Right cardiac atrium (tissue), 5 donors: ENCODE measurements at regions of chr4 and their contacts with region 1.

Region 1: GRCh38 chr4:153634738-153635353 is 49.2 kb upstream of the TLR2 start:
- DNase-seq: no peak
- ATAC-seq: peak in 1 of 2 donors; percentile 44
- H3K4me3 ChIP-seq: no peak overlapping the region
- H3K27ac ChIP-seq: no peak overlapping the region
- H3K4me1 ChIP-seq: no peaks in the 10 kb centered on the region
- H3K27me3 ChIP-seq: no peaks in the 10 kb centered on the region

Region 2: GRCh38 chr4:153750197-153750817 is 115.5 kb after region 1 on chr4:
- intact Hi-C with region 1: loop called in 2 of 4 experiments (anchors 5 kb)
- DNase-seq: peak in 1 of 3 donors; percentile 33
- ATAC-seq: peak; percentile 54 to 77
- H3K4me3 ChIP-seq: no peak overlapping the region
- H3K27ac ChIP-seq: no peak overlapping the region
- H3K4me1 ChIP-seq: no peaks in the 10 kb centered on the region
- H3K27me3 ChIP-seq: no peaks in the 10 kb centered on the region

Region 3: DNA sequence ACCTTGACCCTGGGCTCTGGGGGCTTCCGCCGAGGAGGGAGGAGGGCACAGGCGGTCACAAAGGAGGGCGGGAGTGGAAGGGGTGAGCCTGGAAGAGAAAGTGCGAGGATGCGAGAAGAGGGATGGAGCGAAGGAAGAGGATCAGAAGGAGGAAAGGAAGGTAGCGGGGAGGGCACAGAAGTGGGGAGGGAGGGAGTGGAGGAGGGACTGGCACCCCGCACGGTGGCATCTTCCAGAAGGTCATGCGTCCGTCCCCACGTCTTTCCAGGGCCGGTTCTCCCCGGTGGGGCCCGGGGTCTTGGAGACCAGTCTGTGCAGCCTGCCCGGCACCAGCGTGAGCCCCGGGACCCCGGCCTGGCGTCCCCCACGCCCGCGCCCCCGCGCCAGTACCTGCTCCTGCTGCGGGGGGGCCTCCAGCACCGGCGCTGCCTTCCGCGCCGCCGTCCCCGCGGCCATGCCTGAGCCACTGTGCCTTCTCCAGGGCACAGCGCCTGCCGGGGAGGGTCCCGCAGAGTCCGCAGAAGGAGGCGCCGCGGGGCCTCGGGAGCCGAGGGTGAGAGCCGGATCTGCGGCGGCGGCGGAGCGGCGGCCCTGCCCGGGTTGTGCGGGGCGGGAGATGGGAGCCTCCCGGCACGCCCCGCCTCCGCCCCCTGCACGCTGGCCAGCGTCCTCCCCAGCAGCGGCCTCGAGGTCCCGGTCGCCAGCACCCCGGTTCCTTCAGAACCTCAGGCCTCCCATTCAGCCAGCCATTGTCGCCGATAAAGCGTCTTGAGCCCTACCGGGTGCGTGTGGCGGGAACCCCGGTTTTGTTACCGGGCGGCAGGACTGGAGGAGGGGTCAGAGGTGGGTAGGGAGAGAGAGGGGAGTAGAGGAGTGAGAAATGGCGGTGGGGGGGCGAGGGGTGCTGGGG is 124.8 kb after region 1 on chr4 and contains the start of gene RNF175:
- intact Hi-C with region 1: loop called in 1 of 4 experiments (anchors 5 kb)
- DNase-seq: peak; percentile 19 to 64 (median 41)
- ATAC-seq: peak; percentile 62 to 69
- H3K4me3 ChIP-seq: peak within 1 kb of the TSS; percentile 55
- H3K27ac ChIP-seq: no peak within 1 kb of the TSS
- H3K4me1 ChIP-seq: no peaks in the 10 kb centered on the region
- H3K27me3 ChIP-seq: no peaks in the 10 kb centered on the region
- total RNA-seq, gene RNF175: 3.3 to 10.6 (median 9.5) TPM